ENCODE measurements at regions of chr2 and their contacts with region 1.

Region 1: GRCh38 chr2:42754021-42754775 is 9.7 kb downstream of the OXER1 start:
- DNase-seq: peak; percentile 55
- CTCF ChIP-seq: no peak

Region 2: DNA sequence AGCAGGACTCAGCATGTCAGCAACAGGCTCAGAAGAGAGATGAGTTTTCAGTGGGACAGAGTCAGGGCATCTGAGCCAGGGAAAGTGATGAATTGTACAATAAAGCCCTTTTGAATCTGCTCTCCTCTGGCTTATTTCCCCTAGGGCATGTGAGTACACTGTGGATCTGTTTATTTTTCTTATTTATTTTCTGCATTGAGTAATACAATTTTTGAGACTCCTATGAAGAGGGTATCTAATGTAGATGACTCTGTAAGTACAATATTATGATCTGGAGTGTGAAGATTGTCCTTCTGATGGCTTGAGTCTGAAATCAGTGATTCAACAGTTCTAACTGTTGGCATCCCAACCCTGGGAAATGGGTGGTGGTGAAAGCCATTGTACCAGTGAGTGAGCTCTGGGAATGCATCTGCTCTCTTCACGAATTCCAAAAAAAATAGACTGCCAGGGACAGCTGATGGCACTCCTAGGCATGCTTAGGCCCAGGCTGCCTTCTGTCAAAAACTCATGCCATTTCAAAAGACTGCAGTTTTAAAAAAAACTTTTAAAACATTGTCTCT is 10.7 kb before region 1 on chr2:
- CTCF ChIA-PET with region 1: interaction called, 28 read pairs
- POLR2A ChIA-PET with region 1: no interaction called
- DNase-seq: peak; percentile 0
- CTCF ChIP-seq: no peak

Region 3: DNA sequence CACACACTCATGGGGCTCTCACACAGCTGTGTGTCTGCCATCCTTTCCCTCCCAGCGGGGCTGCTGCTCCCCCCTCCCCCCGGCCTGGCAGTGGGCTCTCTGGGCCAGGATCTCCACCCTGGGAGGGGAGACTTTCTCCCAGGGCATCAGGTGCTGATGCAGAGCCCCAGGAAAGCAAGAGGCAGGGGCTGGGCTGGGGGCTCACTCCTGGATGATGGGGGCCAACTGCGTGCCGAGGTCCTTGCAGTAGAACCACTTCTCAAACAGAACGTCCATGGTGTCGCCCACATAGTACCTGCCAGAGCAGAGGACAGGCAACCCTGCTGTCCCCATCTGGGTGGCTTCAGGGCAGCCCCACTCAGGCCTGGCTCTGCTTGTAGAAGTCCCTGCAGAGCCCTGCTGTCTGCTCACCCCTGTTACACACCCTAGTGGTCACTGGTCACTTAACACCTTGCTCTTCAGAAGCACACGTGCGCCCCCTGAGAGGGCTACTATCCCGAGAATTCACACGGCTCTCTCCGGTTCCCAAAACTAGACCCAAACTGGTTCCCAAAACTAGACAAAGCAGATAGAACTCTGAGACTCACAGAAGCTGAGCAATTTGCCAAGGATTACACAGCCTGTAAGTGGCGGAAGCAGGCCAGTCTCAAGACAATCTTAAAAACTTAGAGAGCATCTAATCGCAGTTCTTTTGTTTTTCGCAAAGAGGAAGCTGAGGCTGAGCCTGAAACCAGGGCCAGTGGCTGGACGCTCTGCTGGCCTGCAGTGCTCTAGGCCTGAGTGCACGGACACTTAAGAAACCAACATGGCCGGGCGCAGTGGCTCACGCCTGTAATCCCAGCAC is 16.3 kb after region 1 on chr2:
- CTCF ChIA-PET with region 1: interaction called, 23 read pairs
- POLR2A ChIA-PET with region 1: no interaction called
- DNase-seq: peak; percentile 63
- CTCF ChIP-seq: peak; percentile 50

Region 4: DNA sequence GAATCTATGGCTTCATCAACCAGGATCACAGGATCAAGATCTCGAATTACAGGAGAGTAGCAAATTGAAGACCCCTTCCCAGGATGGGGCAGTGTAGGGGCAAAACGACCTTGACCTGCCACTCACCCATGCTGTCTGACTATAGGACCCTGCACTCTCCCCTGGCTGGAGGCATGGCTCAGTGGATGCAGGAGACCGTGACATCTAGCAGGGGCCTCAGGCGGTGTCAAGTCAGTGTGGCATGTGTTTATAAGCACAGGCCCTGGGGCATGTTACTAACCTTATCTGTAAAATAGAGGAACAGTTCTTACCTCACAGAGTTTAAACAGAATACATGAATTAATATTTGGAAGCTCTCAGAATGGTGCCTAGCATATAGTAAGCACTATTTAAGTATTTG is 34.7 kb after region 1 on chr2:
- CTCF ChIA-PET with region 1: no interaction called
- POLR2A ChIA-PET with region 1: no interaction called
- DNase-seq: peak; percentile 1
- CTCF ChIP-seq: no peak

Region 5: DNA sequence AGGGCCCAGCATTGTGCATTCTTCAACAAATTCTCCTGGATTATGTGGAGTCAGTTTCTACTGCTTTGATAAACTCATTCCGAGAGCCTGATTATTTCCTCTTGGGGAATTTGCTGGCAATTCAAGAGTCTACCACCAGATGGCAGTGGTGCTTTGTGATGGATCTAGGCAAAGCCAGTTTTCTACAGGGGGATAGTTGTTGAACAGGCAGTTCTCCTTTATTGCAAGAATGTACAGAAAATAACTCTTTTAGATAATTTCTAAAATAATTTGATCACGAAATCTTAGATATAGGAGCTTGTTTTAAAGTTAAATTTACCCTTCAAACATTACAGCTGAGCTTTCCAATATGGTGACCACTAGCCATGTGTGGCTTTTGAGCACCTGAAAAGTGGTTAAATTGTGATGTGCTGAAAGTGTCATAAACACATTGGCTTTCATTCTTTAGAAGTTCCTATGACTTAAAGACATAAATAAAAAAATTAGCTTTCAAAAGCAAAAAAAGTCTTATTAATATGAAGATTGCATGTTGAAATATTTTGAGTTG is 104.9 kb after region 1 on chr2:
- CTCF ChIA-PET with region 1: no interaction called
- POLR2A ChIA-PET with region 1: no interaction called
- DNase-seq: peak; percentile 72
- CTCF ChIP-seq: peak; percentile 81

Measured in GM10248 (cell line).